ENCODE measurements at regions of chr1 and their contacts with region 1.

Region 1: DNA sequence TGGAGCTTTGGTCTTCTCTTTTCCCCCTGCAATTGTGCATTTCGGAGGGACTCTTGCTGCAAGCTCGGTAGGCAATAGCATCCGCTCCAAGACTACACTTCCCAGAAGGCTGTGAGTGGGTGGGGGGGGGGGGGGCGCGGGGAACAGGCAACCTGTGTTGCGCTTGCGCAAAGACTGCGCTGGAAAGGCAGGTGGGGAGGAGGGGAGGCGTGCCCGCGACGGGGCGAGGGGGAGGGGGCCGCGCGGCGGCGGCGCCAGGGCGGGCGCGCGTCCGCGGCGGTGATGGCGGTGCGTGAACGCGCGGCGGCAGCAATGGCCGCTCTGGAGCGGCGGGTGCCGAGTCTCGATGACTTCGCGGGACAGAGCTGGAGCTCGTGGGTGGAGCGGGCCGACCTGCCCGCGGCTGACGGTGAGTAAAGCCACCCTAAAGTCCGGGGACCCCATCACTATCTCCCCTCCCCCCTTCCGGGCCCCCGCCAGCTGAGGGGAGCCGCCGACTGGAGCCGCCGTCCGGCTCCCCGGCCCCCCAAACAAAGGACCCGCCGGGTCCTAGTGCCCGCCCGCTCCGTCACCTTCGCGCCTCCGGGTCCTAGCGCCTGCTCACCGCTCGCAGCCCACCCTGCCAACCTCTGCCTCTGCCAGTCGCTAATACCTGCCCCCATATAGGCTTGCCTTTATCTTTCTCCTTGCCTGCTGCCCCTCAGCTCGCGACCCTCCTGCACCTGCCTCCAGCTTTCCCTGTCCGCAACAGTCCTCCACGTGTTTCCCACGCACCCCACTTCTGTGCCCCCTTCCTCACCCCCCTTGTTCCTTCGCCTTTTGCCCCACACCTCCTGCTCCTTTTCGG is at the start of gene ATXN7L2:
- DNase-seq: peak; percentile 92 to 95 (median 93)
- H3K4me3 ChIP-seq: peak within 1 kb of the TSS; percentile 95 to 98
- H3K4me3 Mint-ChIP-seq: peak within 1 kb of the TSS; percentile 91 to 96 (median 94)
- H3K27ac ChIP-seq: peak within 1 kb of the TSS; percentile 76
- H3K27ac Mint-ChIP-seq: peak within 1 kb of the TSS; percentile 86 to 97 (median 92)
- H3K4me1 ChIP-seq: peaks cover 20% of the 10 kb centered on the region
- H3K4me1 Mint-ChIP-seq: peaks cover 17 to 42% (median 30%) of the 10 kb centered on the region in 4 donors
- H3K27me3 ChIP-seq: peaks cover 4% of the 10 kb centered on the region
- H3K27me3 Mint-ChIP-seq: peaks cover 0 to 5% of the 10 kb centered on the region in 2 donors
- total RNA-seq, gene ATXN7L2: 7.4 to 9.0 TPM

Region 2: DNA sequence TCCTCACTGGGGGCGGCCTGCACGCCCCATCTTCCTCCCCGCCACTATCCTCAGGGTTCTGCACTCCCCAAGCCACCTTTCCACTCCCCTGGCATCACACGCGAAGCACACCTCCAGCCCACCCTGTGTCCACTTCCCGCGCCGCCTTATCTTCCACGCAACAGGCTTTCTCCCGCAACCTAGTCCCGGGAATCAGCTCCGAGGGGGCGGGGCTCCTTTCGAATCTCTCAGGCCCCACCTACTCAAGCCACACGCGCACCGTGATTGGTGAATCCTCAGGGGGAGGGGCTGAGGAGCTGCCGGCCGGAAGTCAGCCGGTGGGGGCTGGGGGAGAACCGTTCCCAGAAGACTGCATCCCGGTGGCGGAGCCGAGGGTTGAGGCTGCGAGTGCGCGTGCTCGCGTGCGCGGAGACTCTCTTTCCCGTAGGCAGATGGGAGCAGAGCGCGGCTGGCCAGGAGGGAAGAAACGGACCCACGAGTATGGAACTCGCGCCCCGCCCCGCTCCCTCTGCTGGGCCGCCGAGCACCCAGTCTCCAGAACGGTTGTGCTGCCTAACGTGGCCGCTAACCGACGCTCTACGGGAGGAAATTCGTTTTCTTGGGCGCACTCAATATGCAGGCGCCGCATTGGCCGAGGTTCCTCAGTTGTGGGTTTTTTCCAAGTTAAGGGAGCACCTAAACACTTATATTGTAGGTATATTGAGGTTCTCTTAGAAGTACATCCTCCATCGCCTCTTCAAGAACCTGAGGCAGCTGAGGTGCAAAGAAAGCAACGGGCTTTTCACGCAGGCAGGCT is 200.7 kb before region 1 on chr1 and contains the start of gene PSRC1:
- CTCF ChIA-PET with region 1: no interaction called
- POLR2A ChIA-PET with region 1: interaction called, 12 read pairs
- intact Hi-C with region 1: no loop called
- DNase-seq: peak; percentile 87 to 91 (median 88)
- H3K4me3 ChIP-seq: peak within 1 kb of the TSS; percentile 74 to 91
- H3K4me3 Mint-ChIP-seq: peak within 1 kb of the TSS; percentile 91 to 100 (median 96)
- H3K27ac ChIP-seq: peak within 1 kb of the TSS; percentile 59
- H3K27ac Mint-ChIP-seq: peak within 1 kb of the TSS; percentile 82 to 93 (median 92)
- H3K4me1 ChIP-seq: peaks cover 23% of the 10 kb centered on the region
- H3K4me1 Mint-ChIP-seq: peaks cover 8 to 30% (median 16%) of the 10 kb centered on the region in 4 donors
- H3K27me3 ChIP-seq: no peaks in the 10 kb centered on the region
- H3K27me3 Mint-ChIP-seq: no peaks in the 10 kb centered on the region
- total RNA-seq, gene PSRC1: 0.17 to 0.28 TPM

Region 3: GRCh38 chr1:109446085-109446695 is 37.7 kb before region 1 on chr1:
- CTCF ChIA-PET with region 1: no interaction called
- POLR2A ChIA-PET with region 1: no interaction called
- intact Hi-C with region 1: no loop called
- DNase-seq: no peak
- H3K4me3 ChIP-seq: no peak overlapping the region
- H3K4me3 Mint-ChIP-seq: no peak overlapping the region
- H3K27ac ChIP-seq: no peak overlapping the region
- H3K27ac Mint-ChIP-seq: no peak overlapping the region
- H3K4me1 ChIP-seq: no peaks in the 10 kb centered on the region
- H3K4me1 Mint-ChIP-seq: no peaks in the 10 kb centered on the region
- H3K27me3 ChIP-seq: peaks cover 3% of the 10 kb centered on the region
- H3K27me3 Mint-ChIP-seq: peaks cover 18 to 20% of the 10 kb centered on the region in 2 donors

Region 4: DNA sequence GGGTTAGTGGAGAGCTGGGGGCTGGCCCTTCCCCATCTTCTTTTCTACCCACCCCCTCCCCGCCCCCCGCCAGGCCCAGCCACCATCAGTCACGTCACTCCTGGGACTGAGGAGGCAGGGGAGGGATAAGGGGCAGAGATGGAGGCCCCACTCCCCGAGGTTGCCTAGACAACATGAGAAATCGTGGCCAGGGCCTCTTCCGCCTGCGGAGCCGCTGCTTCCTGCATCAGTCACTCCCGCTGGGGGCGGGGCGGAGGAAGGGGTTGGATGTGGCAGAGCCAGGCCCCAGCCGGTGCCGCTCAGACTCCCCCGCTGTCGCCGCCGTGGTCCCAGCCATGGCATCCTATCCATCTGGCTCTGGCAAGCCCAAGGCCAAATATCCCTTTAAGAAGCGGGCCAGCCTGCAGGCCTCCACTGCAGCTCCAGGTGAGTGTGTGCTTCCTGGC is 137.0 kb after region 1 on chr1:
- CTCF ChIA-PET with region 1: no interaction called
- POLR2A ChIA-PET with region 1: interaction called, 8 read pairs
- intact Hi-C with region 1: loop called (anchors 5 kb)
- DNase-seq: peak; percentile 96 to 99 (median 97)
- H3K4me3 ChIP-seq: peak overlapping the region; percentile 76 to 93
- H3K4me3 Mint-ChIP-seq: peak overlapping the region; percentile 92 to 99 (median 96)
- H3K27ac ChIP-seq: peak overlapping the region; percentile 96
- H3K27ac Mint-ChIP-seq: peak overlapping the region; percentile 91 to 99 (median 99)
- H3K4me1 ChIP-seq: peaks cover 72% of the 10 kb centered on the region
- H3K4me1 Mint-ChIP-seq: peaks cover 47 to 86% (median 58%) of the 10 kb centered on the region in 4 donors
- H3K27me3 ChIP-seq: no peaks in the 10 kb centered on the region
- H3K27me3 Mint-ChIP-seq: no peaks in the 10 kb centered on the region

Measured in CD4-positive, alpha-beta memory T cell (primary cell).